ENCODE measurements at regions of chr15 and their contacts with region 1.

Region 1: DNA sequence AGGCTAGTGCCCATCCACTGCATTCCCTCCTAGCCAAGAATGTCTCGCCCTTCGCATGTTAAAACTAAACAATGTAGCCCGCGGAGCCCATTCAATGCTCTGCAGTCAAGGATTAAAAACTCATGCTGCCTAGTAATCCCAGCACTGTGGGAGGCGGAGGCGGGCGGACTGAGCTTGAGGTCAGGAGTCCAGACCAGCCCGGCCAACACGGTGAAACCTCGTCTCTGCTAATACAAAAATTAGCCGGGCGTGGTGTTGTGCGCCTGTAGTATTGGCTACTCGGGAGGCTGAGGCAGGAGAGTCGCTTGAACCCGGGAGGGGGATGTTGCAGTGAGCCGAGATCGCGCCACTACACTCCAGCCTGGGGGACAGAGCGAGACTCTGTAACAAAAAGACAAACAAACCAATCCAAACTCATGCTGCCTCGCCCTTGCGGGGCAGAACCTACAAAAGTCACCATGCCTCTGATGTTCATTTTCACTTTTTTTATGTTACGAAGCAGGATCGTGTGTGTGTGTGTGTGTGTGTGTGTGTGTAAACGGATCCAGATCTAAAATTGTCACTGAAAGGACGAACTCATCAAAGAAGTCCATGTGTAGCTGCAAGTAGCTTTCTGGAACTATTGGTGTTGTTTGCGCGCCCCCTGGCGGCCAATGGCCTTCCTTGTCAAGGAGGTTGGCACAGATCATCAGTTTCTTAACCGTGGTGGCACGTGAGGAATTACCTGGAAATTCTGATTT is 54.8 kb upstream of the SPESP1 start:
- ATAC-seq: peak; percentile 92 to 99 (median 96)
- H3K4me3 ChIP-seq: peak overlapping the region; percentile 16 to 37 (median 24)
- H3K27ac ChIP-seq: no peak overlapping the region
- H3K4me1 ChIP-seq: no peaks in the 10 kb centered on the region

Region 2: DNA sequence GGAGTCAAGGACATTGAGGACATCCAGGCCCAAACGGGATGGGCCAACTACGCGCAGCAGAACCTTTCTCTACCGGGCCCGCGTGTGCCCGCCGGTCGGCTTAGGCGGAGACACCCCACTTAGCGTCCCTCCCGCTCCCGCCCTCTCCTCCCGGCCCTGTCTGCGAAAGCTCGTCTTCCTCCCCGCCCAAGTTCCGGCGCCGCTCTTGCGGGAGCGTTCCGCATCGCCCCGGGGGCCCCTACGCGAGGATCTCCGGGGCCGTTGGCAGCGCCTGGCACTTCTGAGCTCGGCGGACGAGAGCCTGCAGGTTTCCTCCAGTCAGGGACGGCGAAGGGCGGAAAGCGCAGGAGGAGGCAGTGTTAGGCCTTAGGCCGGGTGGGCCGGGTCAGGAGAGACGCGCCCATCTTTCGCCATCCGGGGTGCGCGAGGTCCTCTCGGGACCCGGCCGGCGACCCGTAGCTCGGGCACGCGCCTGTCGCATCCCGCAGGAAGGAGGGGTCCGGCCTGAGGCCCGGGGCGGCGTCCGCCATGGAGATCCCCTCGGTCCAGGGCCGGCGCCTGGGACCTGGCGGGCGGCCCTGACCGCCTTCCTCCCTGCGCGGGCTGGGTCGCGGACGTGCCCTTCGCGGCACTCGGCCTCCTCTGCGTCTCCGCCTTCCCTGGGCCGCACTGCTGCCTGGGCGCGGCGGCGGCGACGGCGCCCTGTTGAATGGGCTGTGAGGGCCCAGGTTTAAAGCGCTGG is 597.8 kb before region 1 on chr15 and contains the start of gene FEM1B:
- in situ Hi-C with region 1: loop called in 1 of 9 experiments (anchors 25 kb)
- ATAC-seq: peak; percentile 72 to 84 (median 78)
- H3K4me3 ChIP-seq: peak within 1 kb of the TSS; percentile 56 to 81 (median 74)
- H3K27ac ChIP-seq: peak within 1 kb of the TSS; percentile 94 to 95
- H3K4me1 ChIP-seq: peaks cover 7 to 38% of the 10 kb centered on the region in 2 donors
- total RNA-seq, gene FEM1B: 20.6 to 78.3 (median 44.0) TPM

Region 3: GRCh38 chr15:68559345-68560310 is 315.9 kb before region 1 on chr15:
- in situ Hi-C with region 1: loop called (anchors 10 to 25 kb)
- ATAC-seq: peak; percentile 87 to 98 (median 90)
- H3K4me3 ChIP-seq: peak overlapping the region; percentile 19 to 34 (median 28)
- H3K27ac ChIP-seq: peak overlapping the region in 1 of 2 donors; percentile 47
- H3K4me1 ChIP-seq: peaks cover 22 to 28% of the 10 kb centered on the region in 2 donors

Region 4: DNA sequence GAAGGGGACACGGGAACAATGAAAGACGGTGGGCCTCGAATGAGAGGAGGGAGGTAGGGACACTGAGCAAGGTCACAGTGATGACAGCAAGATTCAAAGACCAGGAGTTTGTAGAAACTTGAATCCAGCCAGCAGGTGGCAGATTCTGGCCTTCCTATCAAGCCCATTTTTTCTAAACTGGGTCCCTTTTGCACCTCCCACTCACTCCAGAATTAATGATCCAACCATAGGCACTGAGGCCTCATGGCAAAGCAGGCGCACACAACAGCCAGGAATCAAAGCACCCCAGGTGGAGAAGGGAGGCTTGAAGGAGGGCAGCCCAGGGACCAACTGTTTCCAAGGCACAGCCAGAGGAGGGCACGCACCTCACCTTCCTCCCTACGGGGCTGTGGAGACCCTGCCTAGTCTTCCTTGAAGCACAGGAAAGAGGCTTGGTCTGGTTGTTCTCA is 145.1 kb before region 1 on chr15:
- in situ Hi-C with region 1: loop called in 1 of 9 experiments (anchors 10 kb)
- ATAC-seq: peak; percentile 32 to 86 (median 75)
- H3K4me3 ChIP-seq: no peak overlapping the region
- H3K27ac ChIP-seq: no peak overlapping the region
- H3K4me1 ChIP-seq: peaks cover 3% of the 10 kb centered on the region in 2 donors

Measured in motor neuron (in vitro differentiated cells).